Activated CD8-positive, alpha-beta memory T cell treated with anti-CD3 and anti-CD28 coated beads, Interleukin-2, amount 10 ng/mL, durations not matched to agents 7 days and 5 days (primary cell): ENCODE measurements at regions of chr10 and their contacts with region 1.

Region 1: GRCh38 chr10:43671656-43672531 is 23.2 kb upstream of the ZNF32 start:
- DNase-seq: peak; percentile 56
- ATAC-seq: peak; percentile 63
- H3K4me3 Mint-ChIP-seq: no peak overlapping the region
- H3K27ac Mint-ChIP-seq: no peak overlapping the region
- H3K4me1 Mint-ChIP-seq: no peaks in the 10 kb centered on the region
- H3K27me3 Mint-ChIP-seq: peaks cover 36% of the 10 kb centered on the region

Region 2: DNA sequence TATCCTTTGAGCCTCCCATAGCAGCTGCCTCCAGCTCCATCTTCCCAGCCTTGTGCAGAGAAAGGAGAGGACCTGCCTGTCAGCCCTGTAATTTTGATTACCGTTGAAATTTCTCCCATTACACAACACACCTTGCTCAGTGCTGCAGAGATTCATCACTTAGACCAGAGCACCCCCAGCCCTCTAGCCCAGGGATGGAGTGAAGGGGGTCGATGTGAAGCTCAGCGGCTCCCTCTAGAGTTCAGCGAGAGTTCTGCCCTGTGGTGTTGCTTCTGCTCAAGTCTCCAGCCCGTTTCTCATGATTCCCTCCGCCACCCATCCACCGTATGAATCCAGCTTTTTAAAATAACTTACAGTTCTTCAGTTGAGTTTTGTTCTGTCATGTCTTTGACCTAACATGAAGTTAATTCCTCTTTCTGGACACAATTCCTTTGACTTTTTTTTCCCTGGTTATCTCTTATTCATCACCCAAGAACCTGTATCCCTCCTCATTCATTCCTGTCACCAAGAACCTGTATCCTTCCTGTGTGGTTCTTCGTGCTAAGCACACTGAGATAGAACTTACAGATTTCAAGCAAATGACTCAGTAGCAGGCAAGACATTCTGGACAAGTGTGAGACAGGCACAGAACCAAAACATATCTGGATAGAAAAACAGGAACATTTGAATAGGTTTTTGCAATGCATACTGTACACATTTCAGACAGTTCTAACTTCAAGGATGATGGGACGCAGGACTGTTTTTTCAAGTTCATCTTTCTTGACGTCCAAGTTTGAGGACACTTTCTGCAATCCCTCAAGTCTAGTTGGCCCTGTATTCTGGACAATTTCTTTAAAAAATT is 11.8 kb after region 1 on chr10:
- CTCF ChIA-PET with region 1: interaction called, 14 read pairs
- DNase-seq: no peak
- ATAC-seq: no peak
- H3K4me3 Mint-ChIP-seq: no peak overlapping the region
- H3K27ac Mint-ChIP-seq: no peak overlapping the region
- H3K4me1 Mint-ChIP-seq: peaks cover 3% of the 10 kb centered on the region
- H3K27me3 Mint-ChIP-seq: peaks cover 38% of the 10 kb centered on the region

Region 3: DNA sequence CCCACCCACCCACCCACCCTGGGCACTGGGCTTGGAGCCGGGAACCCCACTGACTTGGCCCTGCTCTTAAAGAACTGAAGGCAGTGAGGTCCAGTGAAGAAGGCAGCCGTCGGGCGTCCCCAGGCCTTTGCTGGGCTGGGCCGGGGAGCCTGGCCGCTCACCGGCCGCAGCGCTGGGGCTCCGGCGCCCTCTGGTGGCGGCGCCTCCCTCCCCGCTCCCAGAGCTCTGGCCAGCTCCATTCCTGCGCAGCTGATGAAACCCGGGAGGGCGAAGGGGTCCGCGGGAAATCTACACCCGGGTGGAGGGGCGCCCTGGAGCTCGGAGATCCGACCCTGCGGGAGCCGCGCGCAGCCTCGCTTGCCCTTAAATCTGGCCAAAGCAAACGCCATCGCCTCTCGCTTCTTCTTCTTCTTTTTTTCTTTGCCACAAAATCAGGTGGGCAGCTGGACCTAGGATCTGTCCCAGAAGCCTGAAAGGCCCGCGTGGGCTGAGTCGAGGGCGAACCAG is 714.7 kb after region 1 on chr10:
- CTCF ChIA-PET with region 1: interaction called, 19 read pairs
- DNase-seq: peak; percentile 41
- ATAC-seq: peak; percentile 30
- H3K4me3 Mint-ChIP-seq: no peak overlapping the region
- H3K27ac Mint-ChIP-seq: no peak overlapping the region
- H3K4me1 Mint-ChIP-seq: peaks cover 6% of the 10 kb centered on the region
- H3K27me3 Mint-ChIP-seq: peaks cover 32% of the 10 kb centered on the region